Right cardiac atrium (tissue), 5 donors: ENCODE measurements at regions of chr16 and their contacts with region 1.

Region 1: DNA sequence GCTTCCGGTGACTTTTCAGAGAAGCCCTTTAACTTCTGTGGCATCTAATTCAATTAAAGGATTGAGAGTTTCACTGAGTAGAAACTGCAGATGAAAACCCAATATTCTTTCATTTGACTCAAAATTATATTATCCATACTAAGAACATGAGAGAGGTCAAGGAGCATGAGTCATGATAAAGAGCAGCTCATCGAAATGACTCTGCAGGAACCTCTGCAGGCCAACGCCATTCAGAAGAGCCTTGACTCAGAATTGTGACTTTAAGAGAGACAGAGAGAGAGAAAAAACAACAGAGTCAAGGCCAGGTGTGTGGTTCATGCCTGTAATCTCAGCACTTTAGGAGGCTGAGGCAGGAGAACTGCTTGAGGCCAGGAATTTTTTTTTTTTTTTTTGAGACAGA is 417.2 kb upstream of the XYLT1 start:
- DNase-seq: no peak
- ATAC-seq: no peak
- H3K4me3 ChIP-seq: no peak overlapping the region
- H3K27ac ChIP-seq: no peak overlapping the region
- H3K4me1 ChIP-seq: no peaks in the 10 kb centered on the region
- H3K27me3 ChIP-seq: no peaks in the 10 kb centered on the region

Region 2: GRCh38 chr16:17617021-17617552 is 270.9 kb before region 1 on chr16:
- intact Hi-C with region 1: no loop called
- DNase-seq: no peak
- ATAC-seq: no peak
- H3K4me3 ChIP-seq: no peak overlapping the region
- H3K27ac ChIP-seq: no peak overlapping the region
- H3K4me1 ChIP-seq: no peaks in the 10 kb centered on the region
- H3K27me3 ChIP-seq: no peaks in the 10 kb centered on the region

Region 3: GRCh38 chr16:17828012-17828411 is 60.0 kb before region 1 on chr16:
- intact Hi-C with region 1: loop called in 1 of 4 experiments (anchors 10 kb)
- DNase-seq: no peak
- ATAC-seq: no peak
- H3K4me3 ChIP-seq: no peak overlapping the region
- H3K27ac ChIP-seq: no peak overlapping the region
- H3K4me1 ChIP-seq: no peaks in the 10 kb centered on the region
- H3K27me3 ChIP-seq: no peaks in the 10 kb centered on the region